ENCODE measurements at regions of chr5 and their contacts with region 1.

Region 1: GRCh38 chr5:90510438-90510837 is 18.9 kb downstream of the LYSMD3 start:
- DNase-seq: no peak
- ATAC-seq: no peak
- H3K4me3 ChIP-seq: no peak overlapping the region
- H3K27ac ChIP-seq: no peak overlapping the region
- H3K4me1 ChIP-seq: peaks cover 9% of the 10 kb centered on the region
- H3K27me3 ChIP-seq: no peaks in the 10 kb centered on the region
- CTCF ChIP-seq: no peak

Region 2: DNA sequence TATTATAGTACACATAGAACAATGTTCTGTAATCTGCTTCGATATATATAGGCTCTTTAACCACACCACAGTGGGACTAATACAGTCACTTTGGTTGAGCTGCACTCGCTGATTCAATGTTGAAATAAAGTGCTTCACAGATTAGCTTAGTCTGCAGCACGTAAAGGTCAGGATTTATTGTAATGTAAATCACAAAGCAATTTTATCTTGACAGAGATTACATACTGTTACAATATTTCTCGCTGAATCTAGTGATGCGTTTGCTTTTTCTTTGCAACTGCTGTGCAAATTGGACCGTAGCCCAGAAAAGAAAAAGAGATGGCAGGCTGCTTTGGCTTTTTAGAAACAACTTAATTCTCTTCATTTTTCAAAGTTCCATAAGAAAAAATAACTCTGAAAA is 153.8 kb before region 1 on chr5:
- CTCF ChIA-PET with region 1: no interaction called
- POLR2A ChIA-PET with region 1: no interaction called
- intact Hi-C with region 1: no loop called
- DNase-seq: no peak
- ATAC-seq: peak; percentile 33; the same call in 1 of the 2 replicates
- H3K4me3 ChIP-seq: no peak overlapping the region
- H3K27ac ChIP-seq: no peak overlapping the region
- H3K4me1 ChIP-seq: 0 out of 2 replicates have a peak, but pooled peaks cover 4% of the 10 kb centered on the region
- H3K27me3 ChIP-seq: no peaks in the 10 kb centered on the region
- CTCF ChIP-seq: no peak

Region 3: DNA sequence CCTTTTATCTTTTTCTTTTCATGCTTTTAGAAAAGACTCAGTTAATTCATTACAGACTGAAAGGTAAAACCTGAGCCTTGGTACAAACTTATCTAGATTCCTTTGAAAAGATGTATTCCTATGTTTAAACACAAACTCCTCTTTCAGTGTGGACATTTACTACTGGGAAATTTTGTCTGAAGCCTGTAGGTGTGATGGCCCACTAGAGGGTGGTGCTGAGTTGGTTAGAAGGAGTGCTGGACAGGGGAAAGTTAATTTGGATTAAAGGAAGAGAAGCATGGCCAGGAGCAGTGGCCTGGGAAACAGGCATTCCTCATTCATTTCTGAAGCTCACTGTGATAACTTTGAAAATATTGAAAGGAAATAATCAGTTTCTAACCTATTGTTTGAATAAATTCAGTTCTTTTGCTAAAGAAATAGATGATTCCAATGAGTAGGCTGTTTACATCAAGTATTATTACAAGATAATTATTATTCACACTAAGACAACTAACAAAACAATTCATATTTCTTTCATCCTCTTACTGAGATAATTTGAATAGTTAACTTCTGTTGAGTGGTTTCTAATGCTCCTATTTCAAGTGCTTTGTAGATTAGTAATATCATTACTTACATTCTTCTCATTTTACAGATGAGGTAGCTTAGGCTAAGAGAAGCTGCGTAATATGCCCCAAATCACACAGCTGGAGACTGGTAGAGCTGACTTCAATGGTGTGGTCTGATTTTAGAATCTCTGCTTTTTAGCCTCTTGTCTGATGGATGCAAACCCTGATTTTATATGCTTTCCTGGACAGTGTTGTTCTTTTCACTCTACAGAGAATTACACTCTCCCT is 199.1 kb after region 1 on chr5:
- CTCF ChIA-PET with region 1: no interaction called
- POLR2A ChIA-PET with region 1: no interaction called
- intact Hi-C with region 1: no loop called
- DNase-seq: peak; percentile 77
- ATAC-seq: peak; percentile 99
- H3K4me3 ChIP-seq: no peak overlapping the region
- H3K27ac ChIP-seq: no peak overlapping the region
- H3K4me1 ChIP-seq: no peaks in the 10 kb centered on the region
- H3K27me3 ChIP-seq: no peaks in the 10 kb centered on the region
- CTCF ChIP-seq: peak; percentile 97

Region 4: GRCh38 chr5:90898330-90899013 is 388.0 kb after region 1 on chr5:
- CTCF ChIA-PET with region 1: no interaction called
- POLR2A ChIA-PET with region 1: interaction called, 11 read pairs
- intact Hi-C with region 1: no loop called
- DNase-seq: peak; percentile 89
- ATAC-seq: peak; percentile 78
- H3K4me3 ChIP-seq: no peak overlapping the region
- H3K27ac ChIP-seq: peak overlapping the region; percentile 69
- H3K4me1 ChIP-seq: peaks cover 44% of the 10 kb centered on the region
- H3K27me3 ChIP-seq: no peaks in the 10 kb centered on the region
- CTCF ChIP-seq: no peak

Measured in PC-3 (cell line).